Thyroid gland (tissue), 4 donors: ENCODE measurements at regions of chr4 and their contacts with region 1.

Region 1: DNA sequence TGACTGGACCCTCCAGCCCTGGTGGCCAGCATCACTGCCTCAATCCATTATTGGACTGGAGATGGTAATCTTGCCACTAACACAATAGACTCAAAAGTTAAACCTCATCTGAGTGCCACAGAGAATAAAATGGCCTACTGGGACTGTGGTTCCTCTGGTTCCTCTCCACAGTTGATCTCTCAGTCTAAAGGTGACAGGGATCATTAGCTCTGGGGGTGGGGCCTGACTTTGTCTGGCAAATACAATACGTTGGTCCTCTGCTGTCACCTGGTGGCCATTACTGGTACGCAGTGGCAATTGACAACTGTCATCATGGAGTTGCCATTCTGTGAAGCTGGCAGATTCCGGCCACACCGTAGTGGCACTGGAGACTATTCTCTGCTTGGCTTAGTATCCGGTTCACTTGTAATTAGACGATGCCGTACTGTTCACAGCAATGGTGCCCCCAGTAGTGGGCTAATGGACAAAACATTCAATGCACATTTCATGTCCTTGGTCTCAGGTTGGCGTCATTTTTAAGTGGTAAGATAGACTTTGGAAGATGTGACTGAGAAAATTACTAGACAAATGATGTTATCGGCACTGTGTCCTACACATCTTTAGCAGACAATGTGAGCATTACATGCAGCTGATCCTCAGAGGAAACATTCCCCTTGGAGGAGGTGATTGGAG is 6.7 kb downstream of the FGFBP2 start:
- DNase-seq: peak; percentile 91 to 94
- H3K4me3 ChIP-seq: no peak overlapping the region
- H3K27ac ChIP-seq: no peak overlapping the region
- H3K4me1 ChIP-seq: no peaks in the 10 kb centered on the region
- H3K27me3 ChIP-seq: no peaks in the 10 kb centered on the region
- CTCF ChIP-seq: peak; percentile 81 to 99 (median 96)
- POLR2A ChIP-seq: no peak

Region 2: GRCh38 chr4:15805583-15806517 is 150.5 kb before region 1 on chr4:
- intact Hi-C with region 1: loop called (anchors 5 kb)
- DNase-seq: peak; percentile 25 to 39
- H3K4me3 ChIP-seq: no peak overlapping the region
- H3K27ac ChIP-seq: no peak overlapping the region
- H3K4me1 ChIP-seq: no peaks in the 10 kb centered on the region
- H3K27me3 ChIP-seq: no peaks in the 10 kb centered on the region
- CTCF ChIP-seq: peak; percentile 31 to 78 (median 66)
- POLR2A ChIP-seq: no peak

Region 3: GRCh38 chr4:15882675-15883086 is 73.6 kb before region 1 on chr4:
- intact Hi-C with region 1: loop called (anchors 2 kb)
- DNase-seq: peak; percentile 44 to 51
- H3K4me3 ChIP-seq: no peak overlapping the region
- H3K27ac ChIP-seq: no peak overlapping the region
- H3K4me1 ChIP-seq: no peaks in the 10 kb centered on the region
- H3K27me3 ChIP-seq: no peaks in the 10 kb centered on the region
- CTCF ChIP-seq: peak; percentile 45 to 90 (median 86)
- POLR2A ChIP-seq: no peak

Region 4: GRCh38 chr4:16264798-16265197 is 308.5 kb after region 1 on chr4:
- intact Hi-C with region 1: no loop called
- DNase-seq: no peak
- H3K4me3 ChIP-seq: no peak overlapping the region
- H3K27ac ChIP-seq: no peak overlapping the region
- H3K4me1 ChIP-seq: no peaks in the 10 kb centered on the region
- H3K27me3 ChIP-seq: no peaks in the 10 kb centered on the region
- CTCF ChIP-seq: peak; percentile 17 to 81 (median 55)
- POLR2A ChIP-seq: no peak